ENCODE measurements at regions of chr10 and their contacts with region 1.

Region 1: GRCh38 chr10:26881600-26882331 is 21.0 kb upstream of the ABI1 start:
- DNase-seq: no peak

Region 2: GRCh38 chr10:26682931-26683330 is 198.8 kb before region 1 on chr10:
- intact Hi-C with region 1: loop called (anchors 5 kb)
- DNase-seq: no peak

Region 3: DNA sequence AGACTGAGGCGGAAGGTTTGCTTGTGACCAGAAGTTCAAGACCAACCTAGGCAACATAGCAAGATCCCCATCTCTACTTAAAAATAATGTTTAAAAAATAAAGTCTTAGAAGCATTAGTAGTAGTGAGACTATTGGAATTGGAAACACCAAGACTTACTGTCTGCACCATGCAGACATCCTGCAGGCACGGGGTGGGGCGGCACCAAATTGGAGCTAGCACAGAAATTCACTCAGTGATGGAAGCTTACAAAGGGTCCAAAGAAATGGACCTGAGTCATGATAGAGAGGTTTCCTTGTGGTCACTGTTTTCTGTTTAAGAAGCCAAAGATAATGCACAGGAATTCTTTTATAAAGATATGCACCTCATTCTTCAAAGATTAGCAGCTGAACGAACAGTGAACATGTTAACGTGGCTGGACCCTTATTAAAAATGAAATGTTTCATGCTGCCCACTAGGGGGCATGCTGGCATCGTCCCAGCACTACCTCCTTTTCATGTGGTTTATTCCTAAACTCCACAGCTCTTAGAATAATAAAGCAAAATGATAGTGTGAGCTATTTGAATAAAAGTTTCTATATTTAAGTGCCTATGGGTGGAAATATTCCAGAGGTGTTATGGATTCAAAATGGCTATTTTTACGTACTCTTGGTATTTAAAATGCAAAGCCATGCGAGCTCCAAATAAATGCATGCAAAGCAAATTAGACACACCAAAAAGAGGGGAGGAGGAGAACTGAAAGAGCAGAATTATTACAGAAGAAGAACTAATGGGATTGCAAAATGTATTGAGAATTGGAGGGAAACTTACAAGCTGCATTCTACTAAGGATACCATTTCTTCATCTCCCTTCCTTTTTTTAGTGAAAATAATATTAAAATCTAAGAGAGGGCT is 155.7 kb before region 1 on chr10:
- intact Hi-C with region 1: loop called (anchors 2 kb)
- DNase-seq: no peak

Region 4: DNA sequence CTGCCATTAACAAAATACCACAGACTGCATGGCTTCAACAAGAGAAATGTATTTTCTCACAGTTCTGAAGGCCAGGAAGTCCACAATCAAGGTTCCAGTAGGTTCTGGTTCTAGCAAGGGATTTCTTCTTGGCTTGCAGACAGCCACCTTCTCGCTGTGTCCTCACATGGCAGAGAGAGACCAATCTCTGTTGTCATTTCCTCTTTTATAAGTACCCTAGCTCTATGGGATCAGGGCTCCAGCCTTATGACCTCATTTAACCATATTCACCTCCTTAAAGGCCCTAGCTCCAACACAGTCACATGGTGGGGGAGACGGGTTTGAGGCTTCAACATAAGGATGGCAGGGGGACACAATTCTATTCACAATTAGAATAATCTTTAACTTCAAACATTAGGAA is 44.6 kb before region 1 on chr10:
- intact Hi-C with region 1: no loop called
- DNase-seq: no peak

Region 5: GRCh38 chr10:27003432-27003831 is 121.7 kb after region 1 on chr10:
- intact Hi-C with region 1: no loop called
- DNase-seq: no peak

Measured in cardiac septum (tissue), 1 donor.